Calu3 (cell line): ENCODE measurements at regions of chr6 and their contacts with region 1.

Region 1: DNA sequence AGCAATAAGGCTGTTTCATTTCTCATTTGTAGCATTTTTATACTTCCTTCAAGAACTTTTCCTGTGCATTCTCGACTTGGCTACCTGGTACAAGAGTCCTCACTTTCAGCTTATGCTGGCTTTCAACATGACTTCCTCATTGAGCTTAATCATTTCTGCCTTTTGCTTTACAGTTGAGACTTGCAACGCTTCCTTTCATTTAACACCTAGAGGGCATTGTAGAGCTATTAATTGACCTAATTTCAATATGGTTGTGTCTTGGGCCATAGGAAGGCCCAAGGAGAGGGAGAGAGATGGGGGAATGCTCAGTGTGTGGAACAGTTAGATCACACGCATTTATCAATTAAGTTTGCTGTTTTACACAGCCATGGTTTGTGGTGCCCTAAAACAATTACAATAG is 37.2 kb downstream of the SLC22A2 start:
- DNase-seq: no peak
- H3K4me3 Mint-ChIP-seq: no peak overlapping the region
- H3K27ac Mint-ChIP-seq: no peak overlapping the region
- H3K4me1 Mint-ChIP-seq: peaks cover 11% of the 10 kb centered on the region
- H3K27me3 Mint-ChIP-seq: peaks cover 15% of the 10 kb centered on the region
- CTCF ChIP-seq: no peak

Region 2: DNA sequence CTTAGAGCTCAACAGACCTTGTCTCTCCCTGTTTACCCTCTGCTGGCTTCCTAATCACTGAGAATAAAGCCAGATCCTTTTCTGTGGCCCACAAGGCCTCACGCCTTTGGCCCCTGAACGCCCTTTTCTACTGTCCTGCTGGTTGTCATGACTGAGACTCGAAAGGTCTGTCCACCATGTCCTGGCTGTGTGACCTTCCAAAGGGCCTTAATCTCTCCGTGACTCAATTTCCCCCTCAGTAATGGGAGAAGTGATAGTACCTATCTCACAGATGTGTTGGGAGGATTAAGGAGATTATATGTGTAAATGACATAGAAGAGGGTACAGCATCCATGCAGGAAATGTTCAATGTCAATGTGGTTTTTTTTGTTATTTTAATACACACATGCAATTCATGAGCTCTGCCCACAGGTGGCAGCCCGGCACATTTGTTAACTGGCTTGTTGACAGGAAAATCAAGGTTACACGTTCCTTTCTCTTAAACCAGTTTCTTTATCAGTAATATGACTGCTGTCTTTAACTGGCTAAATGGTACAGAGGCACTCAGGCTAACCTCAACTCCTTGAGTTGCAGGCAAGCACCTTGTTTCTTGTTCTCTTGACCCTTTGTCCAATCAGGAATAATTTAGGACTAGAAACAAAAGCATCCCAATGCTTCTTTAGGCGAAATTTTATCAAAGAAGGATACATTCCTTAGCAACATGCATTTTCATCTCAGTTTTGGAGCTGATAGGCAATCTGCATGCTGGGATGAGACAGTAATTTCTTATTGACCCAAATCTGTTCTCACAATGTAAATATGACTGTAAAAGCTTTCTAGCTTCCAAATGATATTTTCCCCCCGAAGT is 83.2 kb before region 1 on chr6:
- CTCF ChIA-PET with region 1: interaction called, 9 read pairs
- intact Hi-C with region 1: loop called (anchors 1 kb)
- DNase-seq: peak; percentile 64
- H3K4me3 Mint-ChIP-seq: no peak overlapping the region
- H3K27ac Mint-ChIP-seq: no peak overlapping the region
- H3K4me1 Mint-ChIP-seq: peaks cover 24% of the 10 kb centered on the region
- H3K27me3 Mint-ChIP-seq: no peaks in the 10 kb centered on the region
- CTCF ChIP-seq: peak; percentile 63

Region 3: DNA sequence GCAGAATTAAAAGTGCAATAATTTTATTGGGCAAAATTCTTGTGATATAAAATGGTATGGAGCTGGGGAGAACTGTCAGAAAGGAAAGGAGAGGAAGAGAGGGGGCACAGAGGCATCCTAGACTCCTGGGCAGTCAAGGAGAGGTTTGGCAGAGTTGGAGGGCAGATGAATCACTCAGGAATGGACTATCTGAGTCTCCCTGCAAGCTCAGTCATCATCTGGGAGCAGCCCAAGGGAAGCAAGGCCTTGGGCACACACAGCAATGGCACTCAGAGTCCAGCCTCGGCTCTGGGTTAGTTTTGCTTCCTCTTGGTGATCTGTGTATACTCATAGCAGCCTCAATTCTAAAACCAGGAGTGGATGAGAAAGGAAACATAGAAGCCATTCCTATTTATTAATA is 32.6 kb before region 1 on chr6:
- CTCF ChIA-PET with region 1: no interaction called
- intact Hi-C with region 1: no loop called
- DNase-seq: no peak
- H3K4me3 Mint-ChIP-seq: no peak overlapping the region
- H3K27ac Mint-ChIP-seq: no peak overlapping the region
- H3K4me1 Mint-ChIP-seq: no peaks in the 10 kb centered on the region
- H3K27me3 Mint-ChIP-seq: no peaks in the 10 kb centered on the region
- CTCF ChIP-seq: no peak

Region 4: DNA sequence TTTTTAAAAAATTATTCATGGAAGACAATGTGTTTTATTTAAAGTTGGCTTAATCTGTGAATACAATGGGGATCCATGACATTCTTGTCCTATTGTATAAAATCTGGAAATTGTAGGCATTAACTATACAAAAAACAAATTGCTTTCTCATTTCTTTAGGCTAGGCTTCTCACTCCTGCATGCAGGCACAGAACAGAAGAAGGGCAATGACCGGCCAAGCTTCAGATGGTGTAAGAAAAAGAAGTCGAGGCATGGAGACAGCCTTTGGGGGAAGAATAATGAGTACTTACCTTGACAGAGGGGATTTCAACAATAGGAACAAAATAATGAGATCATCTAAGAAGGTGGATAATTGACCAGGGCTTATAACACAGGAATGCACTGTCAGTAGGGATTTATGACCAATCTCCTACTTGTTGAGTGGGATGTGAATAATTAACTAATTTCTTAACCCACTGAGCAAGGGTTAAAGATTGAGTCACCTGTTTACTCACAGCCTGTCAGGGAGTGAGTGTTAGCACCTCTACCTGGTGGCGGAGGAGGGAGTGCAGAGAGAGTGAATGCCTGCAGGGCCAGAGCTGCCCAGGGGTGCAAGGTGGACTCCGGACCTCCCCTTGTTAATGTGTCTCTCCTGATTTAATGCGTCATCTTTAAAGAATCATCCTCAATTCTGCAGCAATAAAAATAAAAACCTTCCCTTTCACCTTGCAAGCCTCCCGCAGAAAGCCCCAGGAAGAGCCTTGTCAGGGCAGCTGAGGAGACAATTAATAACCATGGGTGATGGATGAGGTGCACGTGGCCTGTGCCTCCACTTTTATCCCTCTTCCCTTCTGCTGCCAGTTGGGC is 33.3 kb after region 1 on chr6:
- CTCF ChIA-PET with region 1: interaction called, 4 read pairs
- intact Hi-C with region 1: loop called (anchors 1 kb)
- DNase-seq: peak; percentile 86
- H3K4me3 Mint-ChIP-seq: peak overlapping the region; percentile 34
- H3K27ac Mint-ChIP-seq: peak overlapping the region; percentile 87
- H3K4me1 Mint-ChIP-seq: peaks cover 34% of the 10 kb centered on the region
- H3K27me3 Mint-ChIP-seq: no peaks in the 10 kb centered on the region
- CTCF ChIP-seq: no peak

Region 5: GRCh38 chr6:160297310-160297709 is 75.9 kb after region 1 on chr6:
- CTCF ChIA-PET with region 1: interaction called, 39 read pairs
- intact Hi-C with region 1: loop called (anchors 1 kb)
- DNase-seq: peak; percentile 59
- H3K4me3 Mint-ChIP-seq: no peak overlapping the region
- H3K27ac Mint-ChIP-seq: no peak overlapping the region
- H3K4me1 Mint-ChIP-seq: peaks cover 44% of the 10 kb centered on the region
- H3K27me3 Mint-ChIP-seq: no peaks in the 10 kb centered on the region
- CTCF ChIP-seq: peak; percentile 51

Region 6: DNA sequence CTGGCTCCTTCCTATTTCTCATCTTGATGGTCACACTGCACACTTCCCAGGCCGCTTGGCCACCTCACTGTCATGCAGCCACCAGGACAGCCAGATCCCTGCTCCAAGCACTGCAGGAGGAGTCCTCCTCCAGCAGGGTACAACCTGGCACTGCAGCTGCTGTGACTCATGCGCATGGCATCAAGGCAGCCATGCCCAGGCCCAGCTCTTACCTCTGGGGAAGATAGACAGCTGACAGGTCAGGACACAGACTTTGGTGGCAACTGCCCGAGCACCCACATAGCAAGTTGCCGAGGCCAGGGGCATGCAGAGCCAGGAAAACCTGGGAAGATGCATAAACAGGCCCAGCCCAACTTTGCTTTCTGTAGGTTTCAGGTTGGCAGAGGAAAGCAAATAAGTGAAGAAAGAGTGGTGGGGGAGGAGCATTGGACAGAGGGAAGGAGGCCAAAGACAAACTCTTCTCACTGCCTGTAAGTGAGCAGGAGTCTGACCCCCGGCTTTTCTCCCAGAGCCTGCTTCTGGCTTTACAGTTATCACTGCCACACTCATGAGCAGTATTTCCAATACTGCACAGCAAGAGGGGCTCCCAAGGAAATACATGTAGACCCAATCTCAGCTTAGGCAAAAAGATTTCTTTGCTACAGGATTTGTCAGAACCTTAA is 165.6 kb after region 1 on chr6:
- CTCF ChIA-PET with region 1: interaction called, 11 read pairs
- intact Hi-C with region 1: loop called (anchors 2 kb)
- DNase-seq: peak; percentile 77
- H3K4me3 Mint-ChIP-seq: peak overlapping the region; percentile 2
- H3K27ac Mint-ChIP-seq: no peak overlapping the region
- H3K4me1 Mint-ChIP-seq: peaks cover 55% of the 10 kb centered on the region
- H3K27me3 Mint-ChIP-seq: no peaks in the 10 kb centered on the region
- CTCF ChIP-seq: peak; percentile 52

Region 7: GRCh38 chr6:160393891-160394653 is 172.6 kb after region 1 on chr6:
- CTCF ChIA-PET with region 1: interaction called, 18 read pairs
- intact Hi-C with region 1: loop called (anchors 2 kb)
- DNase-seq: peak; percentile 19
- H3K4me3 Mint-ChIP-seq: peak overlapping the region; percentile 17
- H3K27ac Mint-ChIP-seq: peak overlapping the region; percentile 95
- H3K4me1 Mint-ChIP-seq: peaks cover 43% of the 10 kb centered on the region
- H3K27me3 Mint-ChIP-seq: no peaks in the 10 kb centered on the region
- CTCF ChIP-seq: no peak

Region 8: DNA sequence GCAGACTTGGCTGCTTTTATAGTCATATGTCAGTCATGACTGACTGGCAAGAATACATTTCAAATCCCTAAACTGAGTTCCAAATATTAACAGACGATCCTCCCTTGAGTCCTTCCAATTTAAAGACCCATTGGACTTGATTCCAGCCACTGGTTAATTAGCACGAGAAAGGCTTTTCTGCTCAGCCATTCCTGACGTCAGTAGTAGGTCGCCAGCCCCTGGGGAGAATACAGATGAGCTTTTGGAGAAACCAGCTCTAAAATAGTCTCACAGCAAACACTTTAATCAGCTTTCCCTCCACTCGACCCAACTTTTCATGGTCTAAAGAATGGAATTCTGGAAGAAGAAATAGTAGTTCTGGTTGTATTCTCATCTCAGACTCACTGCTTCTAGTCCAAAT is 218.3 kb after region 1 on chr6:
- CTCF ChIA-PET with region 1: no interaction called
- intact Hi-C with region 1: no loop called
- DNase-seq: no peak
- H3K4me3 Mint-ChIP-seq: no peak overlapping the region
- H3K27ac Mint-ChIP-seq: no peak overlapping the region
- H3K4me1 Mint-ChIP-seq: no peaks in the 10 kb centered on the region
- H3K27me3 Mint-ChIP-seq: no peaks in the 10 kb centered on the region
- CTCF ChIP-seq: no peak